ENCODE measurements at regions of chr1 and their contacts with region 1.

Region 1: GRCh38 chr1:221203224-221204054 is 324.2 kb downstream of the HLX start:
- DNase-seq: peak; percentile 82
- H3K4me3 ChIP-seq: no peak overlapping the region
- H3K27ac ChIP-seq: no peak overlapping the region
- H3K4me1 ChIP-seq: no peaks in the 10 kb centered on the region
- H3K27me3 ChIP-seq: peaks cover 0 to 1% of the 10 kb centered on the region in 2 experiments
- CTCF ChIP-seq: peak; percentile 74 to 86
- POLR2A ChIP-seq: no peak

Region 2: DNA sequence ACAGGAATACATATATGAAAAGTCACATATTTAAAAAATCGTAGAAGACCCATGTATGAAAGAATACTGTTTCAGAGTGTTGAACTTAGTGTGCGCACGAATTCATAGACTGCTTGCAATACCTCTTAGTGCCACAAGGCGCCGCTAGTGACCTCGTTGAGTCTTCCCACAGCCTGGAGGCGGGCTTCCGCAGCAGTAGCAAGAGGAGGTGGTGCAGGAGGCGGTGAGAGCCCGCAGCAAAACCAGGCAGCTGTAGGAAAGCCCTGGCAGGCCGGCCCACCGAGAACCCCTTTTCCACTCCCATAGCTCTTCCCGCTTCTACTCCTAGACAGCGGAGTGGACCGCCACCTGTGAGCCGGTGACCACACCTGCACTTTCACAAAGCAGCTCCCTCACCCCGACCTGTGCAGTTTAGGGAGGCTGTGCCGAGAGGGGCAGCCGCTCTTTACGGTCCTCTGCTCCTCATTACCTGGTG is 393.2 kb before region 1 on chr1:
- CTCF ChIA-PET with region 1: interaction called, 31 read pairs
- POLR2A ChIA-PET with region 1: no interaction called
- dilution Hi-C with region 1: no loop called
- intact Hi-C with region 1: loop called (anchors 1 kb)
- DNase-seq: peak; percentile 82
- H3K4me3 ChIP-seq: no peak overlapping the region
- H3K27ac ChIP-seq: no peak overlapping the region
- H3K4me1 ChIP-seq: peaks cover 8% of the 10 kb centered on the region
- H3K27me3 ChIP-seq: peaks cover 6 to 11% of the 10 kb centered on the region in 2 experiments
- CTCF ChIP-seq: peak; percentile 89 to 95
- POLR2A ChIP-seq: no peak

Region 3: GRCh38 chr1:220894025-220894923 is 309.2 kb before region 1 on chr1:
- CTCF ChIA-PET with region 1: interaction called, 10 read pairs
- POLR2A ChIA-PET with region 1: no interaction called
- dilution Hi-C with region 1: no loop called
- intact Hi-C with region 1: loop called (anchors 5 kb)
- DNase-seq: no peak
- H3K4me3 ChIP-seq: peak overlapping the region; percentile 22 to 44 (median 39)
- H3K27ac ChIP-seq: no peak overlapping the region
- H3K4me1 ChIP-seq: peaks cover 15% of the 10 kb centered on the region
- H3K27me3 ChIP-seq: peaks cover 72 to 73% of the 10 kb centered on the region in 2 experiments
- CTCF ChIP-seq: no peak
- POLR2A ChIP-seq: no peak

Region 4: DNA sequence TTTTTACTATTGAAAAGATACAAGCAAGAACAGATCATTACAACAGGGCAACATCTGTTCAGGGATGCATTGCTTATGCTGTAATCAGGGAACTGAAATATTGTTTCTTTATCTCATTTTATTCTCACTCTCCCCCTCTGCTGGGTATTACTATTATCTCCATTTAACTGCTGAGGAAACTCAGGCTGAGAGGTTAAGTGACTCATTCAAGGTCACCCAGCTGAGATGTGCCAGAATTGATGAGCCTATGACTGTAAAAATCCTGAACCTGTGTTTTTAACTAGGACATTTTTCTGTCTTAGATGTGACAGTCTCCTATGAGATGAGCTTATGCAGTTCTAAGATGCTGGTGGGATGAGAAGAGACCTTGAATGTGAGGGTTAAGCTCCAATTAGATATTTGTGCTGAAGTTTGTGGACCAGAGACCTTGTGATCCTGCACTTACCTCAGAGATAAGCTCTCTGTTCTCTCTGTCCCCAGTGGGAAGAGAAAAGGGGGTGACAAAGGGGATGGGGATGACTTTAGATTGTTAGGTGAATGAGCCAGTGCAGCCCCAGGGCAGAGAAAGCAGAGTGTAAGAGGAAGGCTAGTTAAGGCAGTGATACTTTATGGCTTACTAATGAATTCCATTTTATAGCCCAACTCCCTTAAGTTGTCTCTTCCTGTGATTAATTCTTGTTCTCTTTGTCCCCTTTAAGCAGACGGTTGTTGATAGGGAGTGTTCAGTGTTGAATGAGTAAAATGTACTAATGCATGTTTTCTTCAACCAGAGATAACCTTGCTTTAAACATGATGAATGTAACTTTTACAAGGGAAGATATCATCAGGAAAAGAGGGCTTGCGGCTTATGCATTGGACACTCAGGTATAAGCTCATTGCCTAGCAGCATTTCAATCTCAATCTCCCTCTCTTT is 212.8 kb before region 1 on chr1:
- CTCF ChIA-PET with region 1: interaction called, 22 read pairs
- POLR2A ChIA-PET with region 1: no interaction called
- dilution Hi-C with region 1: no loop called
- intact Hi-C with region 1: loop called (anchors 1 kb)
- DNase-seq: peak; percentile 82
- H3K4me3 ChIP-seq: no peak overlapping the region
- H3K27ac ChIP-seq: peak overlapping the region; percentile 24
- H3K4me1 ChIP-seq: peaks cover 15% of the 10 kb centered on the region
- H3K27me3 ChIP-seq: no peaks in the 10 kb centered on the region
- CTCF ChIP-seq: peak in 1 of 2 donors; percentile 17
- POLR2A ChIP-seq: no peak

Region 5: DNA sequence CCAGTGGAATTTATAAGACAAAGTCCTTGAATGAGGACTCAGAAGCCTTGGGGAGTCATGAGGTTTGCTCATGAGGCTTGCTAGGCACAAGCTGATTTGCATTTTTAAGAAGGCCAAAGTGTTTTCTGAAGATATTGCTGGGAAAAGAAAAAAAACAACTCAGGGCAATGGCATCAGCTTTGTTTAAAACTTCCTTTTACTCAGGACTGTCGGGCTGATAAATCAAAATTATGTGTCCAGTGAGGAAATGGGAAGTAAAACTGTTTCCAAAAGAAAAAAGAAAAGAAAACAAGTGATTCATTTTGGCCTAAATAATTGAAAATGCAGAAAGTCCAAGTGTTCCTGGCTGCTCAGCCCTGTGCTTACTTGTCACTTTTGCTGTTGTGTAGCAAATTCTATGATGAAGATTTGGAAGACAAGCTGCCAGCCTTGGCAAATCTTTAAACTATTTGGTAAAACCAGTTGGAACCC is 41.8 kb before region 1 on chr1:
- CTCF ChIA-PET with region 1: interaction called, 11 read pairs
- POLR2A ChIA-PET with region 1: no interaction called
- dilution Hi-C with region 1: no loop called
- intact Hi-C with region 1: no loop called
- DNase-seq: peak; percentile 94
- H3K4me3 ChIP-seq: no peak overlapping the region
- H3K27ac ChIP-seq: peak overlapping the region; percentile 34
- H3K4me1 ChIP-seq: peaks cover 40% of the 10 kb centered on the region
- H3K27me3 ChIP-seq: no peaks in the 10 kb centered on the region
- CTCF ChIP-seq: no peak
- POLR2A ChIP-seq: peak; percentile 27

Region 6: DNA sequence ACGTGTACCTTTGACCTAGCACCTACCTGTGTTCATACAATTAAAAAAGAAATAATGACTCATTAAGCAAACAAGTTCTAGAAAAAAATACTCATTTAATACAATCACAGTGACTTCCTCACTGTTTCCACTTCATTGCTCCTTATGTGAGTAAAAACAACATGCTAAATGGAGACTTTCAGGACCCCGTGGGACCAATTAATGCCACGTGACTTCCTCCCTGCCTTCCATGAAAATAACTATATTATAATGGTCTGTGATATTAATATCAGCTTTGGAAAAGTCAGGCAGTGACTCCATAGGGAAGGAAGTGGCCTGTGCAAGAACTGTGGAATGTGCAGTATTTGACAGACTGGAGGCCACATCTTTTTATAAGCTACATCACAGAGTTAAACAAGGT is 13.6 kb after region 1 on chr1:
- CTCF ChIA-PET with region 1: interaction called, 10 read pairs
- POLR2A ChIA-PET with region 1: no interaction called
- dilution Hi-C with region 1: no loop called
- intact Hi-C with region 1: no loop called
- DNase-seq: peak; percentile 92
- H3K4me3 ChIP-seq: no peak overlapping the region
- H3K27ac ChIP-seq: peak overlapping the region; percentile 6
- H3K4me1 ChIP-seq: peaks cover 14% of the 10 kb centered on the region
- H3K27me3 ChIP-seq: peaks cover 0 to 3% of the 10 kb centered on the region in 2 experiments
- CTCF ChIP-seq: no peak
- POLR2A ChIP-seq: no peak

Region 7: DNA sequence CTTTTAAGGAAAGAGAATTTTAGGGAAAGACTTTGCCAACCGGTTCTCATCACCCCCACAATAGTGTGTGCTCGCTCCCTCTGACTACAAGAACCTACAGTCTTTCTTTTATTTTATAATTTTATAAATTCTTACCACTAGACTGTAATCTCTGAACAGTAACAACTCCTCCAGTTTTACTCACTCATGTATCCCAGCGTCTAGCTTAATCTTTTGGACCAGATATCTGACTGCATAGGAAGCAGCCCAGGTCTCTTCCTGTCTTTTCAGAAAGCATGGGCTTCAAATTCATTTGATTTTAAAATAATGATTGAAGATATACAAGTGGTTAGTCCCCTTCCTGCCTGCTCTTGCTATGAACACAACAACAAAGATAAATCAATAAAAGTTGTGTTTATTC is 557.5 kb after region 1 on chr1:
- CTCF ChIA-PET with region 1: no interaction called
- POLR2A ChIA-PET with region 1: no interaction called
- dilution Hi-C with region 1: no loop called
- intact Hi-C with region 1: no loop called
- DNase-seq: no peak
- H3K4me3 ChIP-seq: no peak overlapping the region
- H3K27ac ChIP-seq: no peak overlapping the region
- H3K4me1 ChIP-seq: peaks cover 57% of the 10 kb centered on the region
- H3K27me3 ChIP-seq: no peaks in the 10 kb centered on the region
- CTCF ChIP-seq: no peak
- POLR2A ChIP-seq: no peak